ENCODE measurements at regions of chr4 and their contacts with region 1.

Region 1: GRCh38 chr4:102826890-102827673 is at the start of gene UBE2D3:
- DNase-seq: peak; percentile 94
- H3K4me3 ChIP-seq: peak within 1 kb of the TSS; percentile 92
- H3K4me3 Mint-ChIP-seq: no peak within 1 kb of the TSS
- H3K27ac Mint-ChIP-seq: no peak within 1 kb of the TSS
- H3K4me1 ChIP-seq: peaks cover 25% of the 10 kb centered on the region
- H3K4me1 Mint-ChIP-seq: peaks cover 5% of the 10 kb centered on the region
- H3K27me3 ChIP-seq: no peaks in the 10 kb centered on the region
- H3K27me3 Mint-ChIP-seq: no peaks in the 10 kb centered on the region
- CTCF ChIP-seq: no peak
- total RNA-seq, gene UBE2D3: 294 and 305 TPM in 2 replicates

Region 2: DNA sequence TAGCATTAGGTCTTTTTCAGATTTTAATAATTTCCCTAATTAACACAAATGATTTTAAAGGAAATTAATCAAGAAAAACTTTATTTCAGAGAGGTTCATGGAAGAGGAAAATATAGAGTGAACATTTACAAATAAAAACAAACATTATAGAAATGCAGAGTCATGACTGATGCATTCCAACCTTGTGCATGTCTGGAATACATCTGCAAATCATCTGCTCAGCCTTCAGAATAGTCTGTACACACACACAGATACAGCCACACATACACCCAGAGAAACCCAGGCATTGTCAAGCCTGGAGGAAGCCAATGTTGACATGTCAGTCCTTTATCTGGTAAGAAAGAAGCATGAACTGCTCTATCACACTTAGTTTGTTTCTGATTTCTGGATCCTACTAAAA is 387.3 kb before region 1 on chr4:
- CTCF ChIA-PET with region 1: no interaction called
- POLR2A ChIA-PET with region 1: interaction called, 3 read pairs
- intact Hi-C with region 1: loop called (anchors 5 kb)
- DNase-seq: no peak
- H3K4me3 ChIP-seq: no peak overlapping the region
- H3K4me3 Mint-ChIP-seq: no peak overlapping the region
- H3K27ac Mint-ChIP-seq: peak overlapping the region; percentile 53
- H3K4me1 ChIP-seq: peaks cover 56% of the 10 kb centered on the region
- H3K4me1 Mint-ChIP-seq: peaks cover 49% of the 10 kb centered on the region
- H3K27me3 ChIP-seq: no peaks in the 10 kb centered on the region
- H3K27me3 Mint-ChIP-seq: no peaks in the 10 kb centered on the region
- CTCF ChIP-seq: no peak

Region 3: DNA sequence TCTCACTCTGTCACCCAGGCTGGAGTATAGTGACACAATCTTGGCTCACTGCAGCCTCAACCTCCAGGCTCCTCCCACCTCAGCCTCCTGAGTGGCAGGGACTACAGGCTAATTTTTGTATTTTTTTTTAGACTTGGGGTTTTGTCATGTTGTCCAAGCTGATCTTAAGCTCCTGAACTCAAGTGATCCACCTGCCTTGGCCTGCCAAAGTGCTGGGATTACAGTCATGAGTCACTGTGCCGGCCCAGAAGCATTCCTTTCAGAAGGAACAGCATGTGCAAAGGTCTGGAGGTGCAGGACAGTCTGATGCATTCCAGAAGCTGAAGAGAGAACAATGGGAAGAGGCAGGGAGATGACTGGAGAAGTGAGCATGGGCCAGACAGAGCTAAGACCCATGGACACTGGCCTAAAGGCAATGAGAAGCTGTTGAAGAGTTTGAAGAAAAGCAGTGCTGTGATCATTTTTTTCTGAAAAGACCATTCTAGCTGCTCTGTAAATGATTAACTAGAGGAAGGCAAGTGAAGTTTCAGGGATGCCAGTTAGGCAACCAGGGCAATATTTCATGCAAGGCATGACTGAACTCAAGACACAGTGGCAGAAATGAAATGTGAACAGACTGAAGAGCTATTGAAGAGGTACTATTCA is 109.5 kb before region 1 on chr4:
- CTCF ChIA-PET with region 1: no interaction called
- POLR2A ChIA-PET with region 1: interaction called, 7 read pairs
- intact Hi-C with region 1: loop called (anchors 2 kb)
- DNase-seq: peak; percentile 38 to 56
- H3K4me3 ChIP-seq: no peak overlapping the region
- H3K4me3 Mint-ChIP-seq: peak overlapping the region; percentile 1
- H3K27ac Mint-ChIP-seq: peak overlapping the region; percentile 25
- H3K4me1 ChIP-seq: peaks cover 35% of the 10 kb centered on the region
- H3K4me1 Mint-ChIP-seq: peaks cover 25% of the 10 kb centered on the region
- H3K27me3 ChIP-seq: no peaks in the 10 kb centered on the region
- H3K27me3 Mint-ChIP-seq: no peaks in the 10 kb centered on the region
- CTCF ChIP-seq: no peak

Region 4: DNA sequence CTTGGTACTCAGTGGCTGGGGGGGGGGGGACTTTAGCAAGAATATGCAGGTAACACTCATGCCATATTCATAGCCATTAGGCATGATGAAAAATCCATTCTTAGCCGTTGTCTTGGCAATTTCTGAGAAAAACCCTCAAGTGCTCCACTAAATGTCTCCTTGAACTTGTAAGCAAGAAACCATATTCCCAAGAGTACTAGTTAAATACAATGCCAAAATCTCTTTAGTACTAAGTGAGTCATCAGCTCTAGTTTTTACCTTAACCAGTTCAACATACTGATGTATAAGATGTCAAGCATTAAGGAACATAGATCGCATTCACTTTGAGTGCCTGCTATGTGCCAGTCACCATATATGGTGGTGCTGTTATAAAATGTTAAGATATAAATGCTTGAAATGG is 27.3 kb before region 1 on chr4:
- CTCF ChIA-PET with region 1: no interaction called
- POLR2A ChIA-PET with region 1: no interaction called
- intact Hi-C with region 1: no loop called
- DNase-seq: no peak
- H3K4me3 ChIP-seq: no peak overlapping the region
- H3K4me3 Mint-ChIP-seq: no peak overlapping the region
- H3K27ac Mint-ChIP-seq: no peak overlapping the region
- H3K4me1 ChIP-seq: no peaks in the 10 kb centered on the region
- H3K4me1 Mint-ChIP-seq: peaks cover 10% of the 10 kb centered on the region
- H3K27me3 ChIP-seq: no peaks in the 10 kb centered on the region
- H3K27me3 Mint-ChIP-seq: no peaks in the 10 kb centered on the region
- CTCF ChIP-seq: no peak

Region 5: GRCh38 chr4:102815981-102816380 is 11.1 kb before region 1 on chr4:
- CTCF ChIA-PET with region 1: no interaction called
- POLR2A ChIA-PET with region 1: interaction called, 13 read pairs
- intact Hi-C with region 1: no loop called
- DNase-seq: no peak
- H3K4me3 ChIP-seq: no peak overlapping the region
- H3K4me3 Mint-ChIP-seq: no peak overlapping the region
- H3K27ac Mint-ChIP-seq: no peak overlapping the region
- H3K4me1 ChIP-seq: peaks cover 35% of the 10 kb centered on the region
- H3K4me1 Mint-ChIP-seq: peaks cover 32% of the 10 kb centered on the region
- H3K27me3 ChIP-seq: no peaks in the 10 kb centered on the region
- H3K27me3 Mint-ChIP-seq: no peaks in the 10 kb centered on the region
- CTCF ChIP-seq: no peak

Region 6: GRCh38 chr4:103008875-103009729 is 182.0 kb after region 1 on chr4:
- CTCF ChIA-PET with region 1: no interaction called
- POLR2A ChIA-PET with region 1: no interaction called
- intact Hi-C with region 1: loop called (anchors 1 kb)
- DNase-seq: peak in 1 of 2 experiments; percentile 58
- H3K4me3 ChIP-seq: no peak overlapping the region
- H3K4me3 Mint-ChIP-seq: no peak overlapping the region
- H3K27ac Mint-ChIP-seq: no peak overlapping the region
- H3K4me1 ChIP-seq: no peaks in the 10 kb centered on the region; the same call in 1 of the 2 replicates
- H3K4me1 Mint-ChIP-seq: no peaks in the 10 kb centered on the region
- H3K27me3 ChIP-seq: no peaks in the 10 kb centered on the region
- H3K27me3 Mint-ChIP-seq: peaks cover 2% of the 10 kb centered on the region
- CTCF ChIP-seq: peak; percentile 62 to 68